ENCODE measurements at regions of chr7 and their contacts with region 1.

Region 1: DNA sequence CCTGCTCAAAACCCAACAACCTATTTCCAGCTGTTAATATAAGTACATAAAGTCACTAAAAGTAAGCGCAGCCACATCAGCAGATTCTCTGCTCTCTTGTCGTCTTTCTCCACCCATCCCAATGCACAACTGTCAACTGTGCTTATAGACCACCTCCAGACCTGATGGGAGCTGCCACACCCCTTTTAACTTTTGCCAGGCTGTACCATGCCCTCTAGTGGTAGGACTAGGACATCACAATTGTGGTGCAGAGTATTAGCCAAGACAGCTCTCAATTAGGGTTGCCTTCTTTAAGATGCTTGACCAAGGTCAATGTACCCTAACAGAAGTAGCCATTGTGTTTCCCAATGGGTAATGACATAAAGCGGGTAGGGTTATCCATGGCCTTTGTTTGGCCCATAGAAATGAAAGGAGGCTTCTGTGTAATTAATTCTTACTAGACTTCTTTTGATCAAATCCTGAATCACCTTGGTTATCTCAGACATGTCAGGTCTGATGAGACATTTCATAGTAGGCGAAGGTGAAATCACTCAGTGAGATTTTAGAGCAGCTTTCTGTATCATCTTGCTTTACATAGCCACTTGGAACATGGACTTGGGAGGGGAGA is 68.1 kb downstream of the SCRN1 start:
- DNase-seq: peak; percentile 28 to 71
- ATAC-seq: peak; percentile 91 to 95
- H3K4me3 ChIP-seq: no peak overlapping the region
- H3K27ac ChIP-seq: no peak overlapping the region
- H3K4me1 ChIP-seq: no peaks in the 10 kb centered on the region
- CTCF ChIP-seq: peak; percentile 85
- EP300 ChIP-seq: no peak
- POLR2A ChIP-seq: no peak
- RAD21 ChIP-seq: peak; percentile 68 to 78

Region 2: DNA sequence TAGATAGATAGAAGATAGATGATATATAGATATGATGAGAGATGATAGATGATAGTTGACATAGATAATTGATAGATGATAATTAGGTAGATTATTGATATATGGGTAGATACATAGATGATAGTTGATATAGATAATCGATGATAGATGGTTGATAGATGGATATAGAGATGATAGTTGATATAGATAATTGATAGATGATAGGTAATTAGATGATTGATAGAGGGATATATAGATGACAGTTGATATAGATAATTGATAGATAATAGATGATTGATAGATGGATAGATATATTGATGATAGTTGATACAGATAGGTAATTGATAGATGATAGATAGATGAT is 285.5 kb before region 1 on chr7:
- CTCF ChIA-PET with region 1: interaction called, 25 read pairs
- POLR2A ChIA-PET with region 1: no interaction called
- DNase-seq: no peak
- ATAC-seq: no peak
- H3K4me3 ChIP-seq: no peak overlapping the region
- H3K27ac ChIP-seq: no peak overlapping the region
- H3K4me1 ChIP-seq: no peaks in the 10 kb centered on the region
- CTCF ChIP-seq: no peak
- EP300 ChIP-seq: no peak
- POLR2A ChIP-seq: no peak
- RAD21 ChIP-seq: no peak; a peak in 1 of 5 replicates

Region 3: DNA sequence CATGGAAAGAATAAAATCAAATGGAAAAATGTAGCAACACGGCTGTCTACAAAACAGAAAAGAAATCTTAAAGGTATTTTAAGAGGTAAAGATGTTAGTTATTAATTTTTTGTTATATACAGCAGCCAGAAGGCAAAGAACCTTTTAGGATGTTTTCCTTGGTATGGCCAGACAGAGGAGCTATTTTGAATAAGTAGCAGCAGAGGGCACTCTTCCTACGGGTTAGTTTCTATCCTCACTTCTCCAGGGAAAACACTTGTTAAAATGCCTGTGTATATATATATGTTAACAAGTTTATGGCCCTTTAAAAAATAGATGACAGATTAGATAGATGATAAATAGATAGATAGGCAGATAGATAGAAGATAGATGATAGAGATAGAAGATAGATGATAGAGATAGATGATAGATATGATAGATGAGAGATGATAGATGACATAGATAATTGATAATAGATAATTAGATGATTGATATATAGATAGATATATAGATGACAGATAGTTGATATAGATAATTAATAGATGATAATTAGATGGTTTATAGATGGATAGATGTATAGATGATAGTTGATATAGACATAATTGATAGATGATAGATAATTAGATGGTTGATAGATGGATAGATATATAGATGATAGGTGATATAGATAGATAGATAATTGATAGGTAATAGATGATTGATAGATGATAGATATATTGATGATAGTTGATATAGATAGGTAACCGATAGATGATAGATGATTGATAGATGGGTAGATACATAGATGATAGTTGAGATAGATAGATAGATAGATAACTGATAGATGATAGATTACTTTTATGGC is 173.0 kb before region 1 on chr7:
- CTCF ChIA-PET with region 1: interaction called, 23 read pairs
- POLR2A ChIA-PET with region 1: no interaction called
- DNase-seq: peak; percentile 13 to 65
- ATAC-seq: peak; percentile 87 to 91
- H3K4me3 ChIP-seq: no peak overlapping the region
- H3K27ac ChIP-seq: no peak overlapping the region
- H3K4me1 ChIP-seq: no peaks in the 10 kb centered on the region
- CTCF ChIP-seq: peak; percentile 76
- EP300 ChIP-seq: no peak
- POLR2A ChIP-seq: no peak
- RAD21 ChIP-seq: peak; percentile 73

Region 4: GRCh38 chr7:29878081-29878688 is 43.3 kb before region 1 on chr7:
- CTCF ChIA-PET with region 1: interaction called, 28 read pairs
- POLR2A ChIA-PET with region 1: no interaction called
- DNase-seq: peak; percentile 39 to 46
- ATAC-seq: peak; percentile 52 to 83; a peak in 3 of 6 replicates
- H3K4me3 ChIP-seq: no peak overlapping the region
- H3K27ac ChIP-seq: no peak overlapping the region
- H3K4me1 ChIP-seq: no peaks in the 10 kb centered on the region
- CTCF ChIP-seq: peak; percentile 77
- EP300 ChIP-seq: no peak
- POLR2A ChIP-seq: no peak
- RAD21 ChIP-seq: peak; percentile 73 to 81

Region 5: DNA sequence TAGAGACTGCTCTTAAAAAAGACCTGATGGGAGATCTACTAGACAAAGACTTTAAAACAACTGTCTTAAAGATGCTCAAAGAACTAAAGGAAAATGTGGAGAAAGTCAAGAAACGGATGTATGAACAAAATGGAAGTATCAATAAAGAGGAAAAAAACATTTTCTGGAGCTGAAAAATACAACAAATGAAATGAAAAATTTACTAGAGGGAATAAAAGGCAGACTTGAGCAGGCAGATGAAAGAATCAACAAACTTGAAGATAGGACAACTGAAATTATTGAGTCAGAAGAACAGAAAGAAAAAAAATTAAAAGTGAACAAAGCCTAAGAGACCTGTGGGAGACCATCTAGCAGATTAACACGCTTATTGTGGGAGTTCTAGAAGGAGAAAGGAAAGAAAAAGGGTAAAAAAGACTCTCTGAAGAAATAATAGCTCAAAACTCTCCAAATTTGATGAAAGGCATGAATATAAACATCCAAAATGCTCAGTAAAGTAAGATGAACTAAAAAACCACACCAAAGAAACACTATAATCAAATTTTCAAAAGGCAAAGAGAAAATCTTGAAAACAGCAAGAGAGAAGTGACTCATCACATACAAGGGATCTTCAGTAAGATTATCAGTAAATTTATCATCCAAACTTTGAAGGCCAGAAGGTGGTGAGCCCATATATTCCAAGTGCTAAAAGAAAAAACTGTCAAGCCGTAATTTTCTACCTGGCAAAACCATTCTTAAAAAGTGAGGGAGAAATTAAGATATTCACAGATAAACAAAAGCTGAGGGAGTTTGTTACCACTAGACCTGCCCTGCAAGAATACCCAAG is 15.1 kb before region 1 on chr7:
- CTCF ChIA-PET with region 1: interaction called, 19 read pairs
- POLR2A ChIA-PET with region 1: no interaction called
- DNase-seq: no peak
- ATAC-seq: no peak
- H3K4me3 ChIP-seq: no peak overlapping the region
- H3K27ac ChIP-seq: no peak overlapping the region
- H3K4me1 ChIP-seq: no peaks in the 10 kb centered on the region
- CTCF ChIP-seq: no peak
- EP300 ChIP-seq: no peak
- POLR2A ChIP-seq: no peak
- RAD21 ChIP-seq: no peak

Region 6: DNA sequence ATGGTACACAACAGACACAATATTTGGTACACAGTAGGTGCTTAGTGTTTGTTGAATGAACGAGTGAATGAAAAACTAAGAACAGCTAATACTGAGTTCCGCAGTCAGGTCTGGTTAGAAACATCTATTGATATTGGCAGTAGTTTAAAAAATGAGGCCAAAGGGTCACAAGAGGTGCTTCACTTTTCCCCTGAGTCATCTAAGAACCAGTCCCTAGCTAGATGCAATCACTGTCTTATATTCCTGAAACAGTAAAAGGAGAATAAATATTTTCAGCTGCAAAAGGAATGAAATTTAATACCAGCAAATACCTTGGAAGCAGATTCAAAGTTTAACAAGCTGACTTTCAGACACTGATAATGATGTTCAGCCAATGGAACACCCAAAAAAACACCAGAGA is 13.6 kb after region 1 on chr7:
- CTCF ChIA-PET with region 1: interaction called, 23 read pairs
- POLR2A ChIA-PET with region 1: no interaction called
- DNase-seq: no peak
- ATAC-seq: no peak
- H3K4me3 ChIP-seq: no peak overlapping the region
- H3K27ac ChIP-seq: no peak overlapping the region
- H3K4me1 ChIP-seq: peaks cover 14% of the 10 kb centered on the region
- CTCF ChIP-seq: no peak
- EP300 ChIP-seq: no peak
- POLR2A ChIP-seq: no peak
- RAD21 ChIP-seq: no peak

Region 7: GRCh38 chr7:30026229-30027064 is 104.9 kb after region 1 on chr7 and contains the start of gene FKBP14:
- CTCF ChIA-PET with region 1: no interaction called
- POLR2A ChIA-PET with region 1: no interaction called
- DNase-seq: peak; percentile 96 to 100
- ATAC-seq: peak; percentile 90 to 94
- H3K4me3 ChIP-seq: peak within 1 kb of the TSS; percentile 71
- H3K27ac ChIP-seq: peak within 1 kb of the TSS; percentile 76 to 94
- H3K4me1 ChIP-seq: peaks cover 13% of the 10 kb centered on the region; the same call in 2 of the 3 replicates
- CTCF ChIP-seq: no peak
- EP300 ChIP-seq: no peak
- POLR2A ChIP-seq: no peak
- RAD21 ChIP-seq: no peak
- polyA plus RNA-seq, gene FKBP14: 17.7 and 22.8 TPM in 2 replicates

Region 8: GRCh38 chr7:31104361-31105255 is 1183.1 kb after region 1 on chr7:
- CTCF ChIA-PET with region 1: no interaction called
- POLR2A ChIA-PET with region 1: no interaction called
- DNase-seq: no peak
- ATAC-seq: no peak
- H3K4me3 ChIP-seq: no peak overlapping the region
- H3K27ac ChIP-seq: no peak overlapping the region
- H3K4me1 ChIP-seq: no peaks in the 10 kb centered on the region
- CTCF ChIP-seq: no peak
- EP300 ChIP-seq: no peak
- POLR2A ChIP-seq: no peak
- RAD21 ChIP-seq: no peak

Measured in A549 (cell line).